CD14-positive monocyte (primary cell): ENCODE measurements at regions of chr1 and their contacts with region 1.

Region 1: DNA sequence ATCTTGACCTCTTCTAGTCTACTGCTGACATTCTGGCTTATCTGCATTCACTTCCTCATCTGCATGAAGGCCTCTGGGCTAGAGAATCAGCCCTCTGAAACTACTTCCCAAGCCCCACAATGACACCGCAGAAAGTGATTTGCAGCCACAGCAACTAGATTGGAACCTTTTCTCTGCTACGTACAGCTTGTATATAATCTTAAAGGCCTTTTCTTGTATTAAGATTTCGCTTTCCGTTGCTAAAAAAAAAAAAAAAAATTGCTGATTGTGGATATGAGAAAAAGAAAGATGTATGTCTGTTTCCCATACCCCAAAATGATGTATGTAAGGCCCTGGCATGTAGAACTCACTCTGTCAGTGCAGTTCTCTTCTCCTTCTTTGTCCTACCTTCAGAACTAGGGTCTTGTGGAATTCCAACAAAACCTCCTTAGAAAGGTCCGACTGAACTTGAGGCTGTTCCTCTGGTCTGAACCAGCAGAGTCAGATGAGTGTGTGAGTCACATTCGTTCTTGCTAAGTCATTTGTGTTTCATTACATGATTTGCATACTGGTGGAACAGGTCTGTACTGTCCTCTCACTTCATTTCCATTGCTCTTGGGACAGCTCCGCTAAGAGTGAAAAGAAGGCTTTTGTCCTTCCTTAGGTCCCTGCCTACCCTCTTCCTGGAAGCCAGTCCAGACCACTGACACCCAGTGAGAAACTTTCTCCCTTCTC is 62.7 kb downstream of the PLPP3 start:
- DNase-seq: peak; percentile 82 to 96 (median 94)
- H3K4me3 ChIP-seq: peak overlapping the region; percentile 7 to 55 (median 48)
- H3K4me3 Mint-ChIP-seq: peak overlapping the region; percentile 75 to 89
- H3K27ac ChIP-seq: peak overlapping the region; percentile 62 to 92
- H3K27ac Mint-ChIP-seq: peak overlapping the region; percentile 98 to 100 (median 99)
- H3K4me1 ChIP-seq: peaks cover 31 to 35% of the 10 kb centered on the region in 2 donors
- H3K4me1 Mint-ChIP-seq: peaks cover 41% of the 10 kb centered on the region
- H3K27me3 ChIP-seq: peaks cover 8 to 9% of the 10 kb centered on the region in 2 donors
- H3K27me3 Mint-ChIP-seq: peaks cover 12 to 29% (median 22%) of the 10 kb centered on the region in 3 donors
- CTCF ChIP-seq: no peak

Region 2: GRCh38 chr1:56424744-56425508 is 91.8 kb before region 1 on chr1:
- intact Hi-C with region 1: no loop called
- DNase-seq: peak; percentile 86 to 94 (median 90)
- H3K4me3 ChIP-seq: peak overlapping the region in 1 of 3 experiments; percentile 57
- H3K4me3 Mint-ChIP-seq: peak overlapping the region; percentile 37 to 69
- H3K27ac ChIP-seq: peak overlapping the region; percentile 67 to 95
- H3K27ac Mint-ChIP-seq: peak overlapping the region; percentile 87 to 98 (median 96)
- H3K4me1 ChIP-seq: peaks cover 35 to 40% of the 10 kb centered on the region in 2 donors
- H3K4me1 Mint-ChIP-seq: peaks cover 38% of the 10 kb centered on the region
- H3K27me3 ChIP-seq: no peaks in the 10 kb centered on the region
- H3K27me3 Mint-ChIP-seq: no peaks in the 10 kb centered on the region
- CTCF ChIP-seq: no peak

Region 3: GRCh38 chr1:56472860-56473259 is 43.8 kb before region 1 on chr1:
- intact Hi-C with region 1: loop called in 1 of 2 experiments (anchors 5 kb)
- DNase-seq: peak; percentile 73 to 86 (median 84)
- H3K4me3 ChIP-seq: peak overlapping the region in 1 of 3 experiments; percentile 35
- H3K4me3 Mint-ChIP-seq: peak overlapping the region in 1 of 2 donors; percentile 71
- H3K27ac ChIP-seq: no peak overlapping the region
- H3K27ac Mint-ChIP-seq: peak overlapping the region; percentile 25 to 86 (median 69)
- H3K4me1 ChIP-seq: peaks cover 46 to 51% of the 10 kb centered on the region in 2 donors
- H3K4me1 Mint-ChIP-seq: peaks cover 56% of the 10 kb centered on the region
- H3K27me3 ChIP-seq: peaks cover 9 to 18% of the 10 kb centered on the region in 2 donors
- H3K27me3 Mint-ChIP-seq: peaks cover 26 to 40% (median 33%) of the 10 kb centered on the region in 3 donors
- CTCF ChIP-seq: no peak

Region 4: GRCh38 chr1:56547953-56548352 is 31.3 kb after region 1 on chr1:
- intact Hi-C with region 1: no loop called
- DNase-seq: no peak
- H3K4me3 ChIP-seq: no peak overlapping the region
- H3K4me3 Mint-ChIP-seq: no peak overlapping the region
- H3K27ac ChIP-seq: no peak overlapping the region
- H3K27ac Mint-ChIP-seq: no peak overlapping the region
- H3K4me1 ChIP-seq: no peaks in the 10 kb centered on the region
- H3K4me1 Mint-ChIP-seq: peaks cover 2% of the 10 kb centered on the region
- H3K27me3 ChIP-seq: no peaks in the 10 kb centered on the region
- H3K27me3 Mint-ChIP-seq: peaks cover 2 to 4% (median 3%) of the 10 kb centered on the region in 3 donors
- CTCF ChIP-seq: no peak